B cell (primary cell): ENCODE measurements at regions of chr1 and their contacts with region 1.

Region 1: DNA sequence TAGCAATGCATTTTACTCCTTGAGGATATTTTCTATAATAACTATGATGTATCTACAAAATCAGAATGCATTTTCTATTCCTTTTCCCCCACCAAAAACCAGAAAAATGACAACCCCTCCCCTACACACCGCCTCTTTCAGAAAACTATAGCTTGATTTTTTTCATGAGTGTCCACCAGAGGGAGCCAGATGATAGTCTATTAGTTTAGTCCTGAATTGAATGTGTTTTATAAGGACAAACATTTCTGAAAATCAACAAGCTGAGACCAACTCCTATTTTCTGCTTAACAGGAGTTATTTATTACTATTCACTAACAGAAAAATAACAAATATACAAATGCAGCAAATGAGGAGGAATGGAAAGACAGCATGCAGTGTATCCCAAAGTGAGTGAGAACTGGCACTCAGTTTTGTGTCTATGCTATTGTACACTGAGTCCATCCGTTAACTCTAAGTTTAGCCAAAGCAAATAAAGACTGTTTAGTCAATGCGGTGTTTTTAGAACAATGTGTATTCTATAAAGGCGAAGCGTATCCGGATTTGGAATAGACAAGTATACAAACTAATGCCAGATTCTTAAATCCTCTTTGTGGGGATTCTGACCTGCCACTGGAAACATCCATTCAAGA is 182.6 kb downstream of the VAV3 start:
- DNase-seq: peak; percentile 81
- ATAC-seq: no peak
- H3K4me3 ChIP-seq: no peak overlapping the region
- H3K4me3 Mint-ChIP-seq: no peak overlapping the region
- H3K27ac ChIP-seq: peak overlapping the region in 1 of 2 donors; percentile 38
- H3K27ac Mint-ChIP-seq: no peak overlapping the region
- H3K4me1 ChIP-seq: peaks cover 42 to 51% of the 10 kb centered on the region in 2 donors
- H3K4me1 Mint-ChIP-seq: peaks cover 56% of the 10 kb centered on the region
- H3K27me3 ChIP-seq: no peaks in the 10 kb centered on the region
- H3K27me3 Mint-ChIP-seq: no peaks in the 10 kb centered on the region
- CTCF ChIP-seq: peak; percentile 93

Region 2: DNA sequence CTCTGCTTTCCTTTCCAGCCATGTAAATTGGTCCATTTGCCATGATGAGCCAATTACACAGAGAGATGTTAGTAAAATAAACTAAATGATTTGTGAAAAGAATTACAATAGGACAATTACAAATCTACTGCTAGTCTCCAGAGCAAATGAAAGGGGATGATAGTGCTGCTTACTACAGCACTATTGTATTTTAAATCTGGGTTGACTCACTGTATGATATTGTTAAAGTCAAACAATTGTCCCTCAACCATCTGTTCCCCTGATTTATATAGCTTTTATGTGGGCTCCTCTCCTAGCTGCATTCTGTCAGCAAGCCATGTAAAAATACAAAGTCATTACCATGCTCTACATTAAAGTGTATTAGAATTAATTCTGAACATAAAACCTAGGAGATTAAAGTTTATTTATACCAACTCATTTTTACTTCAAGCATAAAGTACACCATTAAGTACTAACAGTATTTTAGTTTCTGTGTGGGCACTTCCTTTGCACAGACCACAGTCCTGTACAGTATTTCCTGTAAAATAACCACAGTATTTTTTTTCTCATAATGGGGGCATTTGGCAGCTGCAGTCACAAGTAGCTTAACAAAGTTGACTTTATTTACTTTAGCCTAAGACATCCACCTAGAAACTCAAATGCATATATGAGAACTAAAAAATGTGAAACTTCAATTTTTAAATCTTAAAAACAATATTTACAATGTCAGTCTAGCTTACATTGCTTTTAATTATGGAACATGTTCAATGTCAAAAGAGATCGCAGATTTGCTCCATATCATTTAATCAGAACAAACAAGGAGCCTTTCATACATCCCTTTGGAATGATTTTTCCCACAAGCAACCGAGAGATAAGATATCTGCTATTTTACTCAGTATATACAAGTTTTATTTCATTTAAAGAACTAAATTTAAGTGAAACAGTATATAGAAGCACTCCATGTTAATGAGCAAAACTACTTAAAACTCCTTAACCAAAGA is 47.0 kb after region 1 on chr1:
- CTCF ChIA-PET with region 1: interaction called, 13 read pairs
- POLR2A ChIA-PET with region 1: no interaction called
- intact Hi-C with region 1: loop called (anchors 5 kb)
- DNase-seq: peak; percentile 63
- ATAC-seq: peak; percentile 88
- H3K4me3 ChIP-seq: peak overlapping the region in 3 of 5 experiments; percentile 4 to 54 (median 5)
- H3K4me3 Mint-ChIP-seq: peak overlapping the region; percentile 65
- H3K27ac ChIP-seq: peak overlapping the region; percentile 58 to 82
- H3K27ac Mint-ChIP-seq: peak overlapping the region; percentile 88
- H3K4me1 ChIP-seq: peaks cover 70 to 94% of the 10 kb centered on the region in 2 donors
- H3K4me1 Mint-ChIP-seq: peaks cover 81% of the 10 kb centered on the region
- H3K27me3 ChIP-seq: no peaks in the 10 kb centered on the region
- H3K27me3 Mint-ChIP-seq: no peaks in the 10 kb centered on the region
- CTCF ChIP-seq: no peak

Region 3: DNA sequence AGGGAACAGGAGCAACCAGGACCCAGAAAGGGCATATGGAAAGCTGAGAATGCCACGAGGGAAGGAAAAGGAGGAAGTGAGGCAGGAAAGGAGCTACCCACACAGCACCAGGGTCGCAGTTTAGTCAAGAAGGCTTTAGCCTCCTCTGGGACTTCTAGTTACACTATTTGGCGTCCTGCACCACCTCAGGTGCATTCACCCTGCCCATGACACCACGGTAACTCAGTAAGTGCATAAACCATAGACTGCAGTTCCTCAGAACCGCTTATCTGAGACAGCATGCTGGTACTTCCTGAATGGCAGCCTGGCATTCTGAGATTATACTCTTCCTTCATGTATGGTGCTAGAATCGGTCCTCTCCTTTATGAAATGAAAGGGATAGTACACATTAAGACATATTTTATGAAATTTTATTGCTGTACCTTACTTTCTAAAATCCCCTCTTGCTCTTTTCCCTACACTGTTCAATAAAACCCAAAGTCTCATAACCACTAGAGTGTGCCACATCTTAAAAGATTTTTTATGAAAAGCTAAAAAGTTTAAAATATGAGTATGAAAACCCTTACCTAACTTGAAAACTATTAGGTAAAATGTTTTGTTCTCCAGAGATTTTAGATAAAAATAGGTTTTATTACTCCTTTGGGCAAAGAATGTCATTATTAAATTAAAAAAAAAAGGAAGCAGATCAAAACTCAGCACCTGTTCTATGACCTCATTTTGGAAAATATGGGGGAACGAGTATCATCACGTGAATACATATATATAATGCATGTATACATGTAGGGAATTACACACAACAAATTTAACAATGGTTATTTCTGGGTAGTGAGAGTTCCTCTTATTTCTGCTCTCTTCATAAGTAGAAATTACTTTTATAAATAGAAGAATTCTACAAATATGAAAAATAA is 115.4 kb after region 1 on chr1:
- CTCF ChIA-PET with region 1: interaction called, 13 read pairs
- POLR2A ChIA-PET with region 1: no interaction called
- intact Hi-C with region 1: loop called (anchors 2 kb)
- DNase-seq: peak; percentile 86
- ATAC-seq: peak; percentile 81
- H3K4me3 ChIP-seq: peak overlapping the region in 3 of 5 experiments; percentile 12 to 16 (median 13)
- H3K4me3 Mint-ChIP-seq: peak overlapping the region; percentile 56
- H3K27ac ChIP-seq: peak overlapping the region; percentile 82 to 93
- H3K27ac Mint-ChIP-seq: peak overlapping the region; percentile 94
- H3K4me1 ChIP-seq: peaks cover 83 to 87% of the 10 kb centered on the region in 2 donors
- H3K4me1 Mint-ChIP-seq: peaks cover 79% of the 10 kb centered on the region
- H3K27me3 ChIP-seq: no peaks in the 10 kb centered on the region
- H3K27me3 Mint-ChIP-seq: no peaks in the 10 kb centered on the region
- CTCF ChIP-seq: no peak

Region 4: DNA sequence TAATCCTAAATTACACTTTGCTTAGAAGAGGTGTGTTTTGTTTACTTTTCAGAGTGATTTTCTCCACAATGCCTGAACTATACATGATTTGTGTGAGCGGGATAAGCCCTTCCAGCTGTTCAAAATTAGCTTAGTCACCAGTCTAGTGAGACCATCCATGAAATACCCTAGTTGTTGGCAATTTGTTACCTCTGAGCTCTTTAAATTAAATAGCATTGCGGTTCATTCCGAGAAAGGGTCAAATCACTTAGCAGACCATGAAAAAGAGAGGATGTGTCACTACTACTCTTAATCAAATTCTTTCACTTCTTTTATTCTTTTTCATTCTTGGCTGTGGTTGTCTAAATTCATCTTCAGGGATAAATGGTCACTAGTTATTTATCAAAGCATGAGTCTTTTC is 194.5 kb after region 1 on chr1:
- CTCF ChIA-PET with region 1: interaction called, 15 read pairs
- POLR2A ChIA-PET with region 1: no interaction called
- intact Hi-C with region 1: no loop called
- DNase-seq: no peak
- ATAC-seq: no peak
- H3K4me3 ChIP-seq: no peak overlapping the region
- H3K4me3 Mint-ChIP-seq: no peak overlapping the region
- H3K27ac ChIP-seq: no peak overlapping the region
- H3K27ac Mint-ChIP-seq: no peak overlapping the region
- H3K4me1 ChIP-seq: peaks cover 0 to 5% of the 10 kb centered on the region in 2 donors
- H3K4me1 Mint-ChIP-seq: peaks cover 29% of the 10 kb centered on the region
- H3K27me3 ChIP-seq: no peaks in the 10 kb centered on the region
- H3K27me3 Mint-ChIP-seq: no peaks in the 10 kb centered on the region
- CTCF ChIP-seq: no peak

Region 5: GRCh38 chr1:108049178-108049819 is 267.0 kb after region 1 on chr1:
- CTCF ChIA-PET with region 1: interaction called, 10 read pairs
- POLR2A ChIA-PET with region 1: no interaction called
- intact Hi-C with region 1: loop called (anchors 10 kb)
- DNase-seq: peak; percentile 52
- ATAC-seq: peak; percentile 60
- H3K4me3 ChIP-seq: no peak overlapping the region
- H3K4me3 Mint-ChIP-seq: no peak overlapping the region
- H3K27ac ChIP-seq: no peak overlapping the region
- H3K27ac Mint-ChIP-seq: no peak overlapping the region
- H3K4me1 ChIP-seq: peaks cover 27 to 35% of the 10 kb centered on the region in 2 donors
- H3K4me1 Mint-ChIP-seq: peaks cover 28% of the 10 kb centered on the region
- H3K27me3 ChIP-seq: no peaks in the 10 kb centered on the region
- H3K27me3 Mint-ChIP-seq: no peaks in the 10 kb centered on the region
- CTCF ChIP-seq: peak; percentile 72

Region 6: DNA sequence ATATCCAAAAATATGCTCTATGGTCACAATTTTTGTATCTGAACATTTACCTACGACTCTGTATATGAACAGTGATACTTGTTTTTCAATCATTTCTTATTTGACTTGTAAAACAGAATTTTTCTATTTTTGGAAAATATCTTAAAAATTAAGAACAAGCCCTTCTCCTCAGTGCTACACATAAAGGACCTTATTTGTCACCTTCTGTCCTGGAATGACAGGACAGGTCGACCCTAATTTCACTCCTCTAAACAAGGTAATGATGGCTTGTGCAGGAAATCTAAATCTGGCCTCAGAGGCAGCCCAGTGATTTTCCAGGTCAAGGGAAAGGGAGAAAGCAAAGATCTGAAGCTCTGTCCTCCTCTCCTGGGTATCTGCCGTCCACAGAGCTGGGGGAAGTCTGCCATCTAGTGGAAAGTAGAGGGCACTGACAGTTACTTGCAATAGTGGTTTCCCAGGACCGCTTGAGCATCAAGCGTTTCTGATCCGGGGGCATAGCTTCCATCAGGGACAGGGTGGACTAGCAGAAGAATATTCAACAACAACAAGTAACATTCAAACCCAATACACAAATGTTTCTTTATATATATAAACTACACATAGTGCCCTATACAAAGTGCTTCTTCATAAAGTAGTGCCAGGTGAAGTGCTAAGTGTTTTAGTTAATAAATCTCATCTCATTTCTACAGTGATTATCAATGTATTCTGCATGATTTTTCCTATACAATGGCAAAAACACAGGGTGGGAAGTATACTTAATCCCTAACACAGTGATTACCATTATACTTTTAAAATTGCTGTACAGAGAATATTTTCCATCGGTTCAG is 343.2 kb after region 1 on chr1:
- CTCF ChIA-PET with region 1: interaction called, 709 read pairs
- POLR2A ChIA-PET with region 1: interaction called, 5 read pairs
- intact Hi-C with region 1: loop called (anchors 1 kb)
- DNase-seq: peak; percentile 85
- ATAC-seq: peak; percentile 92
- H3K4me3 ChIP-seq: no peak overlapping the region
- H3K4me3 Mint-ChIP-seq: no peak overlapping the region
- H3K27ac ChIP-seq: no peak overlapping the region
- H3K27ac Mint-ChIP-seq: no peak overlapping the region
- H3K4me1 ChIP-seq: peaks cover 5 to 8% of the 10 kb centered on the region in 2 donors
- H3K4me1 Mint-ChIP-seq: peaks cover 4% of the 10 kb centered on the region
- H3K27me3 ChIP-seq: no peaks in the 10 kb centered on the region
- H3K27me3 Mint-ChIP-seq: peaks cover under 1% of the 10 kb centered on the region
- CTCF ChIP-seq: peak; percentile 96

Region 7: DNA sequence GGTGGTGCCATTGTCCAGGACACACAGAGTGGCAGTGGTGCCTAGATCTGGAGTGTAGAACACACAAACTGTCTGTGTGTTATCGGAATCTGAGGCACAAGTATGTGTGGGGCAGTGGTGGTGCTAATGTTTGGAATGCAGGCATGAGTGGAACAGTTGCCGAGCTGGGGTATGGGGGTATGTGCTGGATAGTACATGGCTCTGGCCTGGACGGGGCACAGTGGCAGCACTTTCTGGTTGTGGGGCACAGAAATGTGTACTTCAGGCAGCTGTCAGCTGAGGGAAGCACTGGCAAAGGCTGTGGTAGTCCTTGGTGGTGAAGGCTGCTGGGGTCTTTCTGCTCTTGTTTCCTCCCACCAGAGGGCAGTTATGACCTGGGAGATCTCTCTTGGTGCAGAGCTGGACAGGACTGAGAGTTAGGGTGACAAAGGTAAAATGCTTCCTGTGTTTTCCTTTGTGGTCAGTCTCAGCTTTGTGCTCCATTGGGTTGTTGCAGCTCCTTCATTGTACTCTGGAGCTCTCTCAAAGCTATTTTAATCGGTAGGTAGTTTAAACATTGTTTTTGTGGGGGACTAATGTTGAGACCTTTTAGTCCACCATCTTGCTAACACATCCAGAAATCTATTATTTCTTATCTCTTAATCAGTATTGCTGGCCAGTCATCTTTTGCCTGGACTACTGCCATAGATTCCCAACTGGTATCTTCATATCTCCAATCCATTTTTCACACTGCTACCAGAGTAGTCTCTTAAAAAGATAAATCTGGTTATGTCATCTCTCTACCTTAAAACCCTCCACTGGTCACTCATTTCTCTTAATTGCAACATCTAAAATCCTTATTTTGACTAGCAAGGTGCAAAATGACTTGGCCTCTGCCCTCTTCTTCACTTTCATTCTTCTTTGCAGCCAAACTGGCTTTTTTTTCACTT is 545.5 kb after region 1 on chr1:
- CTCF ChIA-PET with region 1: no interaction called
- POLR2A ChIA-PET with region 1: no interaction called
- intact Hi-C with region 1: no loop called
- DNase-seq: no peak
- ATAC-seq: no peak
- H3K4me3 ChIP-seq: no peak overlapping the region
- H3K4me3 Mint-ChIP-seq: no peak overlapping the region
- H3K27ac ChIP-seq: no peak overlapping the region
- H3K27ac Mint-ChIP-seq: no peak overlapping the region
- H3K4me1 ChIP-seq: no peaks in the 10 kb centered on the region
- H3K4me1 Mint-ChIP-seq: no peaks in the 10 kb centered on the region
- H3K27me3 ChIP-seq: peaks cover 0 to 6% (median 2%) of the 10 kb centered on the region in 4 experiments
- H3K27me3 Mint-ChIP-seq: peaks cover 38% of the 10 kb centered on the region
- CTCF ChIP-seq: no peak